T-cell (primary cell): ENCODE measurements at regions of chr12 and their contacts with region 1.

Region 1: DNA sequence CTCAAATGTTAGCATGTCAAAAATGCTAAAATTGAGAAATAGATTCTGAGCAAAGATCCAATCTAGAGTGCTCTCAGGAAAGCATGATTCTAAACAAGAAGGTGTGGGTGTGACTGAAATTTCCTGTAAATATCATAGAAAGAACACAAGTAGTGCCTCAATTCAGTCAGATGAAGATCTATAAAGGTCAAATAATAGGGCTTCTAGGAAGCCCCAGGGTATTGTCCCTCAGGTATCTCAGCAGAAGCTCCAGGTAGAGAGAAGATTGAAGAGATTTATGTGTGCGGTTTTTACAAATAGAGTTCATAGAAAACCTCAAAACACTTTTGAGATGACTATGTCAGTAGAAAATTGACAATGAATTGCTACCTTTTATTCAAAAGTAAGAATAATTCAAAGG is 13.0 kb downstream of the KLRD1 start:
- DNase-seq: no peak
- ATAC-seq: peak in 2 of 4 experiments; percentile 34 to 42
- H3K4me3 ChIP-seq: no peak overlapping the region
- H3K4me3 Mint-ChIP-seq: no peak overlapping the region
- H3K27ac ChIP-seq: no peak overlapping the region
- H3K27ac Mint-ChIP-seq: no peak overlapping the region
- H3K4me1 ChIP-seq: peaks cover 6 to 7% of the 10 kb centered on the region in 2 experiments
- H3K4me1 Mint-ChIP-seq: peaks cover 6 to 14% (median 8%) of the 10 kb centered on the region in 3 donors
- H3K27me3 ChIP-seq: no peaks in the 10 kb centered on the region
- H3K27me3 Mint-ChIP-seq: no peaks in the 10 kb centered on the region

Region 2: DNA sequence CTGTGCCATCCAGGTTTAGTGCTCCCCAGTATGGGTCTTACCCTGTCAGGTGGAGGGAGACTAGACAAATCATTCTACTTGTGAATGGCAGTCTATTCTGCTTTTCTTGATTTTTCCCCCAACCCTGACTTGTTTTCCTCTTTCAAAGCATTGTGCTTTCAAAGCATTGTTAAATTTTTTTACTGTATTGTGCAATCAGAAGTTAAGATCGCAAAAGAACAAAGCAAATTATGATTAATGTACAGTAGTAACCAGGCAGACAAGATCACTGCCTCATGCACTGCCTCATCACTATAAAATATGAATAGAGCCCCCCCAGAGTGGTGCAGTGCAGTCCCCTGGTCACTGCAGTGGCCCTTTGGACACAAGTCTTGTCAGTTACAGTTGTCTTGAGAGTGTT is 93.9 kb before region 1 on chr12:
- CTCF ChIA-PET with region 1: no interaction called
- POLR2A ChIA-PET with region 1: interaction called, 3 to 12 read pairs
- DNase-seq: no peak
- ATAC-seq: no peak
- H3K4me3 ChIP-seq: no peak overlapping the region
- H3K4me3 Mint-ChIP-seq: no peak overlapping the region
- H3K27ac ChIP-seq: no peak overlapping the region
- H3K27ac Mint-ChIP-seq: no peak overlapping the region
- H3K4me1 ChIP-seq: peaks cover 0 to 2% of the 10 kb centered on the region in 2 experiments
- H3K4me1 Mint-ChIP-seq: peaks cover 24 to 25% (median 24%) of the 10 kb centered on the region in 3 donors
- H3K27me3 ChIP-seq: no peaks in the 10 kb centered on the region
- H3K27me3 Mint-ChIP-seq: no peaks in the 10 kb centered on the region